ENCODE measurements at regions of chr10 and their contacts with region 1.

Region 1: GRCh38 chr10:129971381-129972144 is 7.5 kb upstream of the EBF3 start:
- DNase-seq: no peak
- H3K4me3 ChIP-seq: peak overlapping the region; percentile 25 to 34
- H3K27ac ChIP-seq: no peak overlapping the region
- H3K4me1 ChIP-seq: peaks cover 40% of the 10 kb centered on the region
- H3K27me3 ChIP-seq: peaks cover 9% of the 10 kb centered on the region
- CTCF ChIP-seq: peak in 2 of 3 experiments; percentile 5 to 19
- POLR2A ChIP-seq: no peak

Region 2: GRCh38 chr10:128631801-128632241 is 1339.7 kb before region 1 on chr10:
- intact Hi-C with region 1: loop called (anchors 10 kb)
- DNase-seq: no peak
- H3K4me3 ChIP-seq: no peak overlapping the region
- H3K27ac ChIP-seq: no peak overlapping the region
- H3K4me1 ChIP-seq: no peaks in the 10 kb centered on the region
- H3K27me3 ChIP-seq: no peaks in the 10 kb centered on the region
- CTCF ChIP-seq: peak in 2 of 3 experiments; percentile 20 to 44
- POLR2A ChIP-seq: no peak

Region 3: DNA sequence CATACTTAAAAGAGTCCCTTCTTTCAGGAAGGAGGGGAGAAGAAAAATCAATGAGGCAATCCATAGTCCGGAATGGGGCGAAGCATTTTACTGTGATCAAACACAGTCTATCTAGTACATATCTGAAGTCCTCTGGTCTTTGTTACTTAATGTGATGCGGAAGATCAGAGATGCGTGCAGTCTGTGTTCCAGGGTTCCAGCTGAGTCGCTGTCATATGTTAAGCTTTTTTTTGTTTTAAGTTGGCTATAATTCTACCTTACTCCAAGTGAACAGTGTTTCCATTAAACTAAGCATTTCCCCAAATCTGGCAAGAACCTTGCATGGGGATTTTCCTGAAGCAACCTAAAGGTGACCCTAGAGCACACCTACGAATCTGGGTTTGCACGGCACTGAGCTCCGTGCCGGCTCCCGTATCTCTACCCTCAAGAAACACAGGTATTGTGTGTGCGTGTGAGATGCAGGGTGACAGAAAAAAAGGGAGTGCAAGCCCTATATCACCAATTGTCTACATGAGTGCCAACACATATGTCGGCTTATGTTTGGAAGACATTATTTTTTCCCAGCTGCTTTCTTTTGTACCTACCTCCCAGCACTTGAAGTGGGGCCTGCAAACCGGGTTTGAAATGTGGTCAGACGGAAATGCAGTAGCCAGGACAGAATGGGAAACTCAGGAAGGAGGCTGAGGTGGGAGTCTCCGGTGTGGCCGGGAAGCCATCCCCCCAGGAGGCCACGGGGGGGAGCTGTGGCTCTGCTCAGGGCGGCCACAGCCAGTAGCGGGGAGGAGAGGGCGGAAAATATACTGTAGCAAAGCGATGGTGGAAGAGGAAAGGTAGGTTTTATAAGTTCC is 940.3 kb before region 1 on chr10:
- intact Hi-C with region 1: loop called (anchors 2 kb)
- DNase-seq: no peak
- H3K4me3 ChIP-seq: no peak overlapping the region
- H3K27ac ChIP-seq: no peak overlapping the region
- H3K4me1 ChIP-seq: no peaks in the 10 kb centered on the region
- H3K27me3 ChIP-seq: no peaks in the 10 kb centered on the region
- CTCF ChIP-seq: peak; percentile 73 to 84 (median 83)
- POLR2A ChIP-seq: no peak